Spleen (tissue), 13 donors: ENCODE measurements at regions of chr20 and their contacts with region 1.

Region 1: GRCh38 chr20:58888521-58889333 is 36.2 kb downstream of the GNAS start:
- DNase-seq: peak; percentile 95
- H3K4me3 ChIP-seq: peak overlapping the region; percentile 52 to 87 (median 63)
- H3K27ac ChIP-seq: peak overlapping the region; percentile 50 to 99 (median 98)
- H3K4me1 ChIP-seq: peaks cover 9 to 44% (median 23%) of the 10 kb centered on the region in 6 donors
- H3K27me3 ChIP-seq: no peaks in the 10 kb centered on the region
- CTCF ChIP-seq: no peak
- POLR2A ChIP-seq: peak; percentile 76 to 95 (median 95)

Region 2: DNA sequence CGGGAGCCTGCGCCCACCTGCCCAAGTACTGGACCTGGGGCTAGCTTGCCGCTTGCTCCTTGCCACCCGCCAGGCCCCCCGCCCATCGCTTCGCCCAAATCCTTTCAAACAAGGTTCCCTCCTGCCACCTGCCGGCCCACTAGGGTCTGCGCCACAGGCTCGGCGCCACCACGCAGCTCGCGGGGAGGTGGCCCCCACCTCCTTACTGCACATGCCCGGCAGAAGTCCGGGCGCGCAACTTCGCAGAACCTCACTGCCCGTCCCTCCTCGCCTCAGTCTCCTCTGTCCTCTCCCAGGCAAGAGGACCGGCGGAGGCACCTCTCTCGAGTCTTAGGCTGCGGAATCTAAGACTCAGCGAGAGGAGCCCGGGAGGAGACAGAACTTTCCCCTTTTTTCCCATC is 49.3 kb before region 1 on chr20:
- intact Hi-C with region 1: no loop called
- DNase-seq: peak; percentile 77
- H3K4me3 ChIP-seq: peak overlapping the region in 1 of 8 donors; percentile 47
- H3K27ac ChIP-seq: no peak overlapping the region
- H3K4me1 ChIP-seq: peaks cover 0 to 14% (median 10%) of the 10 kb centered on the region in 6 donors
- H3K27me3 ChIP-seq: peaks cover 2 to 87% (median 35%) of the 10 kb centered on the region in 7 donors
- CTCF ChIP-seq: peak in 7 of 11 experiments; percentile 25 to 60 (median 45)
- POLR2A ChIP-seq: no peak

Region 3: GRCh38 chr20:59006864-59007664 is 118.3 kb after region 1 on chr20 and contains the start of gene CTSZ:
- intact Hi-C with region 1: loop called (anchors 10 kb)
- DNase-seq: peak; percentile 94
- H3K4me3 ChIP-seq: peak within 1 kb of the TSS; percentile 62 to 89 (median 73)
- H3K27ac ChIP-seq: peak within 1 kb of the TSS; percentile 88 to 99 (median 95)
- H3K4me1 ChIP-seq: peaks cover 32 to 97% (median 73%) of the 10 kb centered on the region in 6 donors
- H3K27me3 ChIP-seq: no peaks in the 10 kb centered on the region
- CTCF ChIP-seq: no peak
- POLR2A ChIP-seq: no peak
- total RNA-seq, gene CTSZ: 198 to 286 (median 238) TPM

Region 4: GRCh38 chr20:59042796-59043660 is 154.3 kb after region 1 on chr20:
- intact Hi-C with region 1: loop called (anchors 10 kb)
- DNase-seq: peak; percentile 99
- H3K4me3 ChIP-seq: peak overlapping the region; percentile 71 to 95 (median 88)
- H3K27ac ChIP-seq: peak overlapping the region; percentile 80 to 94 (median 88)
- H3K4me1 ChIP-seq: peaks cover 19 to 67% (median 56%) of the 10 kb centered on the region in 6 donors
- H3K27me3 ChIP-seq: no peaks in the 10 kb centered on the region
- CTCF ChIP-seq: peak in 6 of 11 experiments; percentile 15 to 65 (median 40)
- POLR2A ChIP-seq: peak in 1 of 3 donors; percentile 19

Region 5: GRCh38 chr20:59341805-59342634 is 453.3 kb after region 1 on chr20:
- intact Hi-C with region 1: no loop called
- DNase-seq: no peak
- H3K4me3 ChIP-seq: no peak overlapping the region
- H3K27ac ChIP-seq: no peak overlapping the region
- H3K4me1 ChIP-seq: peaks cover 0 to 18% (median 11%) of the 10 kb centered on the region in 6 donors
- H3K27me3 ChIP-seq: no peaks in the 10 kb centered on the region
- CTCF ChIP-seq: no peak
- POLR2A ChIP-seq: no peak